ENCODE measurements at regions of chr2 and their contacts with region 1.

Region 1: GRCh38 chr2:35281702-35282101 is 1073.9 kb upstream of the CRIM1 start:
- DNase-seq: no peak
- ATAC-seq: no peak
- H3K4me3 ChIP-seq: no peak overlapping the region
- H3K27ac ChIP-seq: no peak overlapping the region
- H3K4me1 ChIP-seq: no peaks in the 10 kb centered on the region
- H3K27me3 ChIP-seq: no peaks in the 10 kb centered on the region
- CTCF ChIP-seq: no peak

Region 2: GRCh38 chr2:36878429-36878828 is 1596.7 kb after region 1 on chr2:
- CTCF ChIA-PET with region 1: no interaction called
- POLR2A ChIA-PET with region 1: interaction called, 10 read pairs
- in situ Hi-C with region 1: no loop called
- intact Hi-C with region 1: no loop called
- DNase-seq: no peak
- ATAC-seq: no peak
- H3K4me3 ChIP-seq: no peak overlapping the region
- H3K27ac ChIP-seq: no peak overlapping the region
- H3K4me1 ChIP-seq: no peaks in the 10 kb centered on the region
- H3K27me3 ChIP-seq: no peaks in the 10 kb centered on the region
- CTCF ChIP-seq: no peak